K562 (cell line): ENCODE measurements at regions of chr10 and their contacts with region 1.

Region 1: GRCh38 chr10:102641880-102642735 is 2.2 kb upstream of the TRIM8 start:
- DNase-seq: peak; percentile 79 to 96 (median 89)
- ATAC-seq: peak; percentile 81
- H3K4me3 ChIP-seq: peak overlapping the region; percentile 78
- H3K27ac ChIP-seq: peak overlapping the region; percentile 89
- H3K4me1 ChIP-seq: peaks cover 6 to 45% of the 10 kb centered on the region in 2 experiments; a peak in 4 of 5 replicates
- H3K27me3 ChIP-seq: no peaks in the 10 kb centered on the region
- CTCF ChIP-seq: no peak
- EP300 ChIP-seq: no peak
- POLR2A ChIP-seq: peak; percentile 73
- RAD21 ChIP-seq: no peak

Region 2: DNA sequence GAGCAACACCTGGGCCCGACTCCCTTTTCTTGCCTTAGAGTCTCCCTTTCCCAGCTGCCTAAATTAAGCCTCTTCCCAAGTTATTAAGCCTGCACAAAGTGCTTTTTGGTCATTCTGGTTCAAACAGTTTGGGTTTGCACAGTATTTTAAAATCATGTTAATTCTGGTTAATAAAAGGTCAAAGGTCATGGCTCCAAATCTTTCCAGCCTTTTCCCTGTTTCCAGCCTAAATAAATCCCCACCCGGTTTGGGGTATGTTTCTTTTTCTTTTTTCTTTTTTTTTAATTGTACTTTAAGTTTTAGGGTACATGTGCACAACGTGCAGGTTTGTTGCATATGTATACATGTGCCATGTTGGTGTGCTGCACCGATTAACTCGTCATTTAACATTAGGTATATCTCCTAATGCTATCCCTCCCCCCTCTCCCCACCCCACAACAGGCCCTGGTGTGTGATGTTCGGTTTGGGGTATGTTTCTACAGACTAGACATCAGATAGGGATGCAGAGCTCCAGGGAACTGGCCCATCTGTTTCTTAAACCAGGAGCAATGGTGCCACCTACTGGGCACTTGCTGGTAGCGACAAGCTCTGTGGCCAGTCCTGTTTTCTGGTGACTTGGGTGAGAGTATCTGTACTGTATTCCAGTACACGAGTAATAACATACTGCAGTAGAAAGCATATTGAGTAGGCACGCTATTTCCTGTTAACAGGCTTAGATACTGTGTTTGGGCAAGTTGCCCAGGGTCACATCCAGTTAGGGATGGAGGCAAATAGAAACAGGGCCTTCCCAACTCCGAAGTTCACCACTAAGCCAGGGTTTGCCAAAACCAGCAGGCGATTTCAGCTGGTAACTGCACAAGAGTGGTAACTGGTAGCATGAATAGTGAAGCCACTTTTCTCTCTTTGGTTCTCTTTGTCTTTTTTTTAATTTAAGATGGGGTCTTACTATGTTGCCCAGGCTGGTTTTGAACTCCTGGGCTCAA is 58.4 kb before region 1 on chr10:
- CTCF ChIA-PET with region 1: no interaction called
- POLR2A ChIA-PET with region 1: no interaction called
- in situ Hi-C with region 1: no loop called
- intact Hi-C with region 1: no loop called
- DNase-seq: peak; percentile 82 to 88 (median 84)
- ATAC-seq: peak; percentile 99
- H3K4me3 ChIP-seq: no peak overlapping the region
- H3K27ac ChIP-seq: no peak overlapping the region
- H3K4me1 ChIP-seq: peaks cover 0 to 3% of the 10 kb centered on the region in 2 experiments; a peak in 2 of 5 replicates
- H3K27me3 ChIP-seq: no peaks in the 10 kb centered on the region
- CTCF ChIP-seq: peak; percentile 70 to 85 (median 77)
- EP300 ChIP-seq: no peak
- POLR2A ChIP-seq: no peak
- RAD21 ChIP-seq: peak; percentile 71 to 82

Region 3: DNA sequence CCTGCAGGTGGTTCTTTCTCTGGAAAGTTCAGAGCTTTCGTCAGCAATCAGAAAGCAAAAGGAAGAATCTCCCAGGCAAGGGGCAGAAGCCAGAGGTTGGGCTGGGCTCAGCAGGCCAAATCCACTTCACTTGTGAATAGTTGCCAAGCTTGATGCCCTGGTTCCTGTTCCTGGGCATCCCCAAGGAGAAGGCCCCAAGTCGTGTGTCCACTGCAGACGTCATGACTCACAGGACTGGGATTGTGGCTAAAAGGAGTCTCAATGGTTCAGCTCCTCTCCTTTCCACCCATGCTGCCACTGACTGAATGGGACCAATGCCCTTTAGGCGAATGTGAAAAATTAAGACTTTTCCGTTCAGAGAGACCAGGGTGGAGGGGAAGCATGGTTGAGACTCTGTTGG is 36.4 kb before region 1 on chr10:
- CTCF ChIA-PET with region 1: no interaction called
- POLR2A ChIA-PET with region 1: no interaction called
- in situ Hi-C with region 1: no loop called
- intact Hi-C with region 1: loop called (anchors 5 kb)
- DNase-seq: no peak
- ATAC-seq: no peak
- H3K4me3 ChIP-seq: no peak overlapping the region
- H3K27ac ChIP-seq: no peak overlapping the region
- H3K4me1 ChIP-seq: peaks cover 11 to 21% of the 10 kb centered on the region in 2 experiments; a peak in 3 of 5 replicates
- H3K27me3 ChIP-seq: no peaks in the 10 kb centered on the region
- CTCF ChIP-seq: no peak
- EP300 ChIP-seq: no peak
- POLR2A ChIP-seq: no peak
- RAD21 ChIP-seq: no peak

Region 4: GRCh38 chr10:102660888-102661657 is 19.0 kb after region 1 on chr10:
- CTCF ChIA-PET with region 1: no interaction called
- POLR2A ChIA-PET with region 1: interaction called, 60 read pairs
- in situ Hi-C with region 1: no loop called
- intact Hi-C with region 1: no loop called
- DNase-seq: peak; percentile 63 to 71 (median 66)
- ATAC-seq: peak; percentile 78
- H3K4me3 ChIP-seq: no peak overlapping the region
- H3K27ac ChIP-seq: no peak overlapping the region
- H3K4me1 ChIP-seq: peaks cover 3 to 23% of the 10 kb centered on the region in 2 experiments; a peak in 3 of 5 replicates
- H3K27me3 ChIP-seq: no peaks in the 10 kb centered on the region
- CTCF ChIP-seq: no peak
- EP300 ChIP-seq: no peak
- POLR2A ChIP-seq: no peak
- RAD21 ChIP-seq: no peak

Region 5: DNA sequence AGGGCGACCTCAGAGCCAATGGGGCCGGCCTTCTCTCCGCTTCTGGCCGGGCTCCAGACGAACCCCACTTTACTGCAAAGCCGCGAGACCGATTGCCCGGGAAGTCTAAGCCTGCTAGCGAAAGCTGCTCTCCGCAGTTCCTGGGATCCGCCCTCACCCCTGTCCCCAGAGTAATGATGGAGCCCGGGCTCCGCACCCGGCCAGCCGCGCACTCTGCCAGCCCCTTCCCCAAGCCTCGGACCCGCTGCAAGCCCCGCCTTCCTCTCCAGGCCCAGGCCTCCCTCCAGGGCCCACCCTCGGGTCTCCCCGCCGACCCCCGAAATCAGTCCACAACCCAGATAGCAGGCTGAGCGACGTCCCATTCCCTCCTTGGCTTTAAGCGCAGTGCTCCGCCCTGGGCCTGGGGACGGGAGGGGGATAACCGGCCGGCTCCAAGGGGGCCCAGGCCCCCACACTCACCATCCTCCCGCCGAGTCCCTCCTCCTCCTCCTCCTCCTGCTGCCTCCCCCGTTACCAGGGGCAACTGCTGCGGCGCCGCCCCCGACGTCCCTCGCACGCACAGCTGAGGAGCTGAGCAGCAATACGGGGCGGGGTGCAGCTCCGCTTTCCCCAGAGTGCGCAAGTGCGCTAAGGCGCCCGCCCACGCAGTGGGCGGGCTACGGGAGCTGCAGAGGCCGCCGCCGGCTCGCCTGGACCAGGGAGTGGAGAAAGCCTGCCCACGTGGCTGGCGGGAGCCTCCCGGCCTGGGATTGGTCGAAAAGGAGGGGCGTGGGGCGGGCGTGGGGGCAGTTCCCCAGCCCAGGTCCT is 71.9 kb after region 1 on chr10 and contains the start of gene ARL3:
- CTCF ChIA-PET with region 1: no interaction called
- POLR2A ChIA-PET with region 1: interaction called, 5 read pairs
- in situ Hi-C with region 1: no loop called
- intact Hi-C with region 1: loop called (anchors 5 kb)
- DNase-seq: peak; percentile 93 to 97 (median 95)
- ATAC-seq: peak; percentile 91
- H3K4me3 ChIP-seq: peak within 1 kb of the TSS; percentile 95
- H3K27ac ChIP-seq: peak within 1 kb of the TSS; percentile 83
- H3K4me1 ChIP-seq: peaks cover 20% of the 10 kb centered on the region in 2 experiments; a peak in 4 of 5 replicates
- H3K27me3 ChIP-seq: no peaks in the 10 kb centered on the region
- CTCF ChIP-seq: peak in 1 of 3 experiments; percentile 51; a peak in 3 of 6 replicates
- EP300 ChIP-seq: no peak
- POLR2A ChIP-seq: no peak
- RAD21 ChIP-seq: no peak
- polyA plus RNA-seq, gene ARL3: 8.2 to 8.9 TPM